Gastrocnemius medialis (tissue), 4 donors: ENCODE measurements at regions of chr2 and their contacts with region 1.

Region 1: GRCh38 chr2:112601751-112602150 is 17.3 kb downstream of the CHCHD5 start:
- DNase-seq: no peak
- ATAC-seq: no peak
- H3K4me3 ChIP-seq: no peak overlapping the region
- H3K27ac ChIP-seq: no peak overlapping the region
- H3K4me1 ChIP-seq: peaks cover 0 to 3% of the 10 kb centered on the region in 2 donors
- H3K27me3 ChIP-seq: no peaks in the 10 kb centered on the region
- CTCF ChIP-seq: no peak
- POLR2A ChIP-seq: no peak

Region 2: GRCh38 chr2:112685271-112685884 is 83.6 kb after region 1 on chr2:
- in situ Hi-C with region 1: loop called in 1 of 4 experiments (anchors 5 kb)
- intact Hi-C with region 1: no loop called
- DNase-seq: no peak
- ATAC-seq: no peak
- H3K4me3 ChIP-seq: no peak overlapping the region
- H3K27ac ChIP-seq: no peak overlapping the region
- H3K4me1 ChIP-seq: peaks cover 6 to 16% of the 10 kb centered on the region in 2 donors
- H3K27me3 ChIP-seq: no peaks in the 10 kb centered on the region
- CTCF ChIP-seq: peak in 1 of 5 experiments; percentile 16
- POLR2A ChIP-seq: no peak

Region 3: GRCh38 chr2:112690853-112691401 is 89.2 kb after region 1 on chr2:
- in situ Hi-C with region 1: loop called in 1 of 4 experiments (anchors 5 kb)
- intact Hi-C with region 1: loop called (anchors 1 kb)
- DNase-seq: peak; percentile 44 to 56
- ATAC-seq: peak; percentile 84 to 89
- H3K4me3 ChIP-seq: peak overlapping the region in 1 of 4 donors; percentile 42
- H3K27ac ChIP-seq: peak overlapping the region in 1 of 4 donors; percentile 30
- H3K4me1 ChIP-seq: no peaks in the 10 kb centered on the region
- H3K27me3 ChIP-seq: no peaks in the 10 kb centered on the region
- CTCF ChIP-seq: peak; percentile 59 to 79 (median 73)
- POLR2A ChIP-seq: no peak

Region 4: GRCh38 chr2:112726497-112727190 is 124.9 kb after region 1 on chr2:
- in situ Hi-C with region 1: loop called (anchors 5 to 10 kb)
- intact Hi-C with region 1: loop called (anchors 1 kb)
- DNase-seq: peak; percentile 70 to 80
- ATAC-seq: peak; percentile 89 to 97
- H3K4me3 ChIP-seq: no peak overlapping the region
- H3K27ac ChIP-seq: no peak overlapping the region
- H3K4me1 ChIP-seq: no peaks in the 10 kb centered on the region
- H3K27me3 ChIP-seq: no peaks in the 10 kb centered on the region
- CTCF ChIP-seq: peak; percentile 83 to 93 (median 92)
- POLR2A ChIP-seq: no peak

Region 5: GRCh38 chr2:112733456-112733855 is 131.7 kb after region 1 on chr2:
- in situ Hi-C with region 1: loop called (anchors 5 to 10 kb)
- intact Hi-C with region 1: no loop called
- DNase-seq: no peak
- ATAC-seq: no peak
- H3K4me3 ChIP-seq: no peak overlapping the region
- H3K27ac ChIP-seq: no peak overlapping the region
- H3K4me1 ChIP-seq: no peaks in the 10 kb centered on the region
- H3K27me3 ChIP-seq: no peaks in the 10 kb centered on the region
- CTCF ChIP-seq: no peak
- POLR2A ChIP-seq: no peak